T-cell (primary cell): ENCODE measurements at regions of chr6 and their contacts with region 1.

Region 1: DNA sequence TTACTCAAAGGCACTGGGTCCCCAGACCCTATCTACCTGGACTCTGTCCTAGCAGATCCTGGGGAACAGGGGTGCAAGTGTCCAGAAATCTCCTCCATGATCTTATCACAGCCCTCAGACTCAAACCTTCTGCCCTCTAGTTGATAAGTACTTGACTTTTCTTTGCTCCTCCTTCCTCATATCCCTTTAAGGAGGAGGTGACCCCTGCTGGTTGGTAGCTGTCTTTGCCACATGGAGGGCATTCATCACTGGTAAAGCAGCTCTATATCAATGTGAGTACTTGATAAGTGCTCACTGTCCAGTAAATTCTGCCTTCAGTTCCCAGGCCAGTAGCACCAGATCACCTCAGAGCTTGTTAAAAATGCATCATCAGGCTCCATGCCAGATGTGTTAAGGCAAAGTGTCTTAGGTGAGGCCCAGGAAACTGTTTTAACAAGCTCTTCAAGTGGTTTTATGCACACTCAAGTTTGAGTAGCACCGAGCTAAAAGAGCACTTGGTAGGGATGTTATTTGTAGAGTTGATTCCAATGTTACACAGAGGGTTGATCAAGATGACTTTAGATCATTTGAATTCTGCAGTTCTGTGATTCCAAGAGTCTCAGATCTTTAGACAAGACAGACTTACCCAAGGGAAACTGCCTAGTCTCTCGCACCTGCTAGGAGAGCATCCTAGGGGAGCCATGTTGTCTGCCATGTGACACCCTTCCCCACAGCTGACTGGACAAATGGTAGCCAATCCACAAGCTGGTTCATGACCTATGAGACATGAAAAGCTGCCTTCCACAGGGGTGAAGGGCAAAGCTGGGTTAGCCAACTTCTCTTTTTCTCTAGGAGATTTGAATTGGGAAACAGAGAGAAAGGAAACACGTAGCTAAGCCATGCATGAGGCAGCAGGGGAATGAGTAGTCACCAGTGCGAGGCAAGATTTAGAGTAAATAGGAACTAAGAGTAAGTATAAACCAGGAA is 18.6 kb downstream of the TREML2 start:
- DNase-seq: peak in 31 of 35 experiments; percentile 22 to 74 (median 43)
- ATAC-seq: peak; percentile 87 to 99 (median 96)
- H3K4me3 ChIP-seq: no peak overlapping the region
- H3K4me3 Mint-ChIP-seq: no peak overlapping the region
- H3K27ac ChIP-seq: peak overlapping the region; percentile 22
- H3K27ac Mint-ChIP-seq: no peak overlapping the region
- H3K4me1 ChIP-seq: peaks cover 9 to 19% of the 10 kb centered on the region in 2 experiments
- H3K4me1 Mint-ChIP-seq: peaks cover 17 to 41% (median 34%) of the 10 kb centered on the region in 3 donors
- H3K27me3 ChIP-seq: peaks cover 0 to 6% of the 10 kb centered on the region in 2 experiments
- H3K27me3 Mint-ChIP-seq: peaks cover 0 to 4% of the 10 kb centered on the region in 2 donors

Region 2: GRCh38 chr6:41200296-41200900 is 18.0 kb after region 1 on chr6:
- CTCF ChIA-PET with region 1: interaction called in 1 of 2 experiments, 10 read pairs
- POLR2A ChIA-PET with region 1: no interaction called
- DNase-seq: peak; percentile 27 to 83 (median 65)
- ATAC-seq: peak; percentile 71 to 82 (median 74)
- H3K4me3 ChIP-seq: peak overlapping the region; percentile 36 to 41
- H3K4me3 Mint-ChIP-seq: peak overlapping the region; percentile 38 to 80 (median 57)
- H3K27ac ChIP-seq: peak overlapping the region; percentile 98
- H3K27ac Mint-ChIP-seq: peak overlapping the region; percentile 99
- H3K4me1 ChIP-seq: peaks cover 32 to 53% of the 10 kb centered on the region in 2 experiments
- H3K4me1 Mint-ChIP-seq: peaks cover 71 to 92% (median 86%) of the 10 kb centered on the region in 3 donors
- H3K27me3 ChIP-seq: no peaks in the 10 kb centered on the region
- H3K27me3 Mint-ChIP-seq: no peaks in the 10 kb centered on the region